HepG2 (cell line): ENCODE measurements at regions of chr3 and their contacts with region 1.

Region 1: DNA sequence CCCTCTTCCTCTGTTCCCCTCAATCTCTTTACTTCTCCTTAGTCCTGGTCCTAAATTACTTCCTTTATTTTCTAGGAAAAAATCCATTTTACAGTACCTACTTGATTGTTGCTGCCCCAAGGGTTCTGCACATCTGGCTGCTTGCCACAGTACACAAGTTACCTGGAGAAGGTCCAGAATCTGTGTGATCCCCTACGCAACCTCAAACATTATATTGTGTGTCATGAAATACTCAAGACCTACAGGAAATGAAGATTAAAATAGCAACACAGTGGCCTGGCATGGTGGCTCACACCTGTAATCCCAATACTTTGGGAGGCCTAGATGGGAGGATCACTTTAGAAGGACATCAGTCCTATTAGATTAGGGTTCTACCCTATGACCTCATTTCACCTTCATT is 48.7 kb downstream of the PRKAR2A start:
- DNase-seq: peak; percentile 16
- ATAC-seq: no peak
- H3K4me3 ChIP-seq: no peak overlapping the region
- H3K27ac ChIP-seq: no peak overlapping the region
- H3K4me1 ChIP-seq: no peaks in the 10 kb centered on the region
- H3K27me3 ChIP-seq: no peaks in the 10 kb centered on the region
- CTCF ChIP-seq: no peak
- EP300 ChIP-seq: no peak
- POLR2A ChIP-seq: no peak
- RAD21 ChIP-seq: no peak

Region 2: DNA sequence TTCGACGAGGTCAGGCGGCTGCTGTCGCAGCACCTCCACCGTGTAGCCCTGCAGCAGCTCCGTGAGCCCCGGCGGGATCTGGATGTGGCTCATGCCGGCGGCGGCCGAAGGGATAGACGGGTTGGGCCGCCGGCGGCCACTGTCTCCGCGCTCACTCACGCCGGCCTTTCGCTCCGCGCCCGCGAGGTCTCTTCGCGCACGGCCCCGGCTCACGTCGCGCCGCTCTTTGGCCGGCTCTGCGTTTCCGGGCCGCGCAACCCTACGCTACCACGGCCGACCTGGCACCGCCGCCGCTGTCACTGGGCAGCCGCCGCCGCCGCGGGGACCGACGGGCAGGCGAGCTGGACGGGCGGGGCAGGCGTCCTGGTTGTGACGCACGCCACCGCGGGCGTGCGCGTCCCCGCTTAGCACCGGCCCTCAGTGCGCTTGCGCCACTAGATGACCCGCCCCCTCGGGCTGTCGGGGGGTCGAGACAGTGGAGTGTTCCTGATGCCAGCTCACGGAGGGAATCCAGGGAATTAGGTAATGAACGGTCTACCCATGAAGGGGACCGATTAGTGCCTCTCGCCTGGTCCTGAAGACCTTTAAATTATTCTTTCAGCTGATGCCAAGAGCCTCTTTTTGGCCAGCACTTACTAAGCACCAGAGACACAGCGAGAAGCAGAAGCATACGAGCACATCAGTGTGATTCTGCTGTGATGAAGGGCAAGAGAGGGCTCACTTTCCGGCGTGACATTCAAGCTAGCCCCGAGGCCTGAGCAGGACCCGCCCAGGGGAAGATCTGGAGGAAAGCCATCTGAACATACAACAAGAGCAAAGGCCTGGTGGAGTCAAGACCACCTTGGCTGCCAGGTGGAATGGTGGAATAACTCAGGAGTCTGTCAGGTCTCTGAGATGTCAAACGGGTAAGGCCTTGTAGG is 48.8 kb after region 1 on chr3 and contains the start of gene PRKAR2A:
- CTCF ChIA-PET with region 1: no interaction called
- POLR2A ChIA-PET with region 1: no interaction called
- in situ Hi-C with region 1: no loop called
- intact Hi-C with region 1: loop called (anchors 10 kb)
- DNase-seq: peak; percentile 73
- ATAC-seq: peak; percentile 92
- H3K4me3 ChIP-seq: peak within 1 kb of the TSS; percentile 67 to 89 (median 78)
- H3K27ac ChIP-seq: peak within 1 kb of the TSS; percentile 88
- H3K4me1 ChIP-seq: peaks cover 26% of the 10 kb centered on the region
- H3K27me3 ChIP-seq: no peaks in the 10 kb centered on the region
- CTCF ChIP-seq: no peak; the same call in 1 of the 2 replicates
- EP300 ChIP-seq: no peak
- POLR2A ChIP-seq: peak; percentile 58 to 89; a peak in 3 of 4 replicates
- RAD21 ChIP-seq: peak; percentile 31
- total RNA-seq, gene PRKAR2A: 29.2 and 38.5 TPM in 2 replicates

Region 3: GRCh38 chr3:49283997-49284396 is 485.0 kb after region 1 on chr3:
- CTCF ChIA-PET with region 1: no interaction called
- POLR2A ChIA-PET with region 1: no interaction called
- in situ Hi-C with region 1: no loop called
- intact Hi-C with region 1: no loop called
- DNase-seq: no peak
- ATAC-seq: no peak
- H3K4me3 ChIP-seq: no peak overlapping the region
- H3K27ac ChIP-seq: no peak overlapping the region
- H3K4me1 ChIP-seq: no peaks in the 10 kb centered on the region
- H3K27me3 ChIP-seq: no peaks in the 10 kb centered on the region
- CTCF ChIP-seq: no peak
- EP300 ChIP-seq: no peak
- POLR2A ChIP-seq: no peak
- RAD21 ChIP-seq: no peak